ENCODE measurements at regions of chr1 and their contacts with region 1.

Region 1: DNA sequence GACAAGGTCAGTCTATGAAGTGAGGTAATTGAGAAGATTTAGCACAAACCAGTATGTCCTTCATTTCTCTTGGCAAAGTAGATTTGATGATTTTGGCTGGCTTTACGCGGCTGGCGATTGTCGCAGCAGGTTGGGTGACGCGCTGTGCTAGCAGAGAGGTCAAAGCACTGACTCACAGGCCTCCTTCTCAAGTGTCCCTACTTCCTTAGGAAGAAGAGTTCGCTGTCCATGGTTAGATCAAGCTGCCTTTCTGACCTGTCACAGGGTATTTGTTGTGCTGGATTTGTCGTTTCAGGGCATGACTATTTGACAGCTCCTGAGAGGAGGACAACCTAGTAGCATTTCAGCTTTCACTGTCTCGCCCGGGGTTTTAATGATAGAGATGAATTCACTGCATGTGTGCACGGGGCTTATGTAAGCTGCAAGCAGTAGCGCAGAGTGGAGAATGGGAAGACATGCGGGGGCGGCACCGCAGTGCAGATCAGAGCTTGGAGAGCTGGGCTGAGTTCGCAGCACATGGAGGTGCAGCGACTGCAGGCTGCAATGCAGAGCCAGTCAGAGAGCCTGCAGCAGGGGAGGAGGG is 32.8 kb downstream of the XCL1 start:
- DNase-seq: peak; percentile 60 to 92
- H3K4me3 ChIP-seq: peak overlapping the region in 1 of 2 donors; percentile 33
- H3K27ac ChIP-seq: peak overlapping the region; percentile 91 to 94
- H3K4me1 ChIP-seq: peaks cover 13 to 30% of the 10 kb centered on the region in 2 donors
- H3K27me3 ChIP-seq: no peaks in the 10 kb centered on the region
- CTCF ChIP-seq: no peak

Region 2: DNA sequence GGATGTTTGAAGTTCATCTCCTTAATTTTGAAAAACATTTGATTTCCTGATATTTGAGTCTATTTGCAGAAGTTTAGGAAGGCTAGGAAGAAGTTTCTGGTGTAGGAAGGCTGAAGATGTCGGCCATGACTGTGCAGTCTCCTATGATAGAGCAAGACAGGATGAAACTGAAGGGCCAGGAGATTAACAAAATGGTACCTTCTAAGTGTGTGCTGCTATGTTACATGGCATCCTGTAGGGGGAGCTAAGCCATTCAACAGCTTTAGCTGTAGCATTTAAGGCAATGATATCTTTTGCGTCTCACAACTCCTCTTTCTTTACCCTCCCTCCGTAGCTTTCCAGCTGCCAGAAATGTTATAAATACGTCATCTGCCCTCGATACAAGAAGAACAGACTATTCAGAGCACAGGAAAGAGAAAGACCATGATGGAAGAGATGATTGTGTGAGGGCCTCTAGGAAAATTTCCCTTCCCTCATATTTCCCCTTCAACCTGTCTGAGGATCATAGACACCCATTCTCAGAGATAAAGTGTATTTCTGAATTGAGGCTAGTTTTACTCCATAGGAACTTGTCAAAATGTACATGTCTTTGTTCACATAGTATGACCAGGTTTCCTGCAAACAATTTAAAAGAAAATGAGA is 28.2 kb after region 1 on chr1:
- intact Hi-C with region 1: loop called (anchors 1 kb)
- DNase-seq: no peak
- H3K4me3 ChIP-seq: no peak overlapping the region
- H3K27ac ChIP-seq: peak overlapping the region; percentile 61 to 67
- H3K4me1 ChIP-seq: peaks cover 0 to 12% of the 10 kb centered on the region in 2 donors
- H3K27me3 ChIP-seq: no peaks in the 10 kb centered on the region
- CTCF ChIP-seq: peak in 1 of 3 experiments; percentile 21

Region 3: DNA sequence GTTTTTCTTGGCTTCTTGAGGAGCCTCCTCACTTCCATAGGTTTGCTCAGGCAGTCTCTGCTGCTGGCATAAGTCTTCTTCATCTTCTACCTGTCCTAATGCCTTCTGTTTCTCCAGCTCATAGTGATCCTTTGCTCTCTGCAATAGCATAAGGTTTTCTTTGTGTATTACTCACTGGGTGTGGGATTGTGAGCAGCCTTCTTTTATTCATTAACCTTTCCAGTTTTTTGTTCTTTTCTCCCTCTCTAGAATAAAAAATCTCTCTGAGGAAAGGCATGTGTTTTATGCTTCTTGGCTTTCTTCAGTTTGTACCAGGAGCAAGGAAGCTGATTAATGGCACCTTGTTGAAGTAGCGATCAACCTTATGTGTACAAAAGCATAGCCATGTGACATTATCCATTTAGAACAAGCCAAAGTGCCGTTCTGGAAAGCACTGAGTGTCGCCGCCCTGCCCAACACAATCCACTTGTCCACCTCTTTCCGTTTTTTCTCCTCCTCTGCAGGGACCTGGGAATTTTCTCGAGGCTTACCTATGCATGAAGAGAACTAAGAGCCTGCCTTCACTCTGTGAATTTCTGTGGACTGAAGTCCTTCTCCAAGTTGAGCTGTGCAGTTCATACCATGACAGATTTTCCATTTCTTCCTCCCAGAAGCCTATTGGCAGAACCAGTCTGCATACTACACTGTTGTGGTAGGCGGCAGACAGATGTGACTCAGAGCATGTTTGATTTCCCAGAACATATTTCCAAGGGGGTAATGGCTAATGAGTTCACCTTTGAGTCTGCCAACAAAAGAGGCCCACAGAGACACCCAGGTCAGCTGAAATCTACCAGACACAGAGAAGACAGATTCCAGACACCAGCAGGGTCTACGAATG is 80.7 kb after region 1 on chr1:
- intact Hi-C with region 1: loop called (anchors 5 kb)
- DNase-seq: peak in 1 of 2 donors; percentile 73
- H3K4me3 ChIP-seq: peak overlapping the region in 1 of 2 donors; percentile 25
- H3K27ac ChIP-seq: peak overlapping the region; percentile 42 to 58
- H3K4me1 ChIP-seq: no peaks in the 10 kb centered on the region
- H3K27me3 ChIP-seq: no peaks in the 10 kb centered on the region
- CTCF ChIP-seq: no peak

Region 4: DNA sequence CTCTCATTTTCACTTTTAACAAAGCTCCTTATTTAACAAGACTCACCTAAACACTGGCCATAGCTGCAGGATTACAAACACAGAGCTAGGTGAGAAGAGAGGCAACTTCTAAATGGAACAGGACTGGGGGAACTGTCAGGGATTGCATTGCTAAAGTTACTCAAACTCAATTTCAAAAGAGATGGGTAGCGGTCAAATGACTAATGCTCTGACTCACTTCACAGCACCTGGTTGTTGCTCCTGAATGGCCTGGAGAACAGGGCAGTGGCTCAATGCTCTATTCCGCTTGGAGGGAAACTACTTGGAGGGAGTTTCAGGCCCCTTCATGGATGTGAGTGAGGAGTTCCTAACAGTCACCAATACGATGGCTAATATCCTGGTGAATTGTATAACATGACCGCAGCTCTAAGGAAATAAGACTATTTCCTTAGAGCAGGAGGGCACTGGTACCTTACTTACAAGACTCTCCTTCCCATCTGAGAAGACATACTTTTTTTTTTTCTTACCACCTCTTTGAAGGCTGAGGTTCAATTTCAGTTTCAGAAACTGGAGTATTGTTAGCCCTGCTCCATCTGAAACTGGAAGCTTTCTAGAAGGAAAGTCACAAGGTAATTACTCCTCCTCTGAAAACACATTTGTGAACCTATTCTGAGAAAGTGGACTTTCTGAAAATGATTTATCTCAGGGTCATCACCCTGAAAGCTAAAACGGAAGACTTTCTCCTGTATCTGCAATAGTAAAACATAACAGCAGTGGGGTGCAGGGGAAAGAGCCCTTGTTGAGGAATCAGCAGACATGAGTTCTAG is 110.3 kb after region 1 on chr1:
- intact Hi-C with region 1: loop called (anchors 5 kb)
- DNase-seq: no peak
- H3K4me3 ChIP-seq: no peak overlapping the region
- H3K27ac ChIP-seq: no peak overlapping the region
- H3K4me1 ChIP-seq: no peaks in the 10 kb centered on the region
- H3K27me3 ChIP-seq: no peaks in the 10 kb centered on the region
- CTCF ChIP-seq: no peak

Region 5: GRCh38 chr1:169106095-169106920 is 497.1 kb after region 1 on chr1 and contains the start of gene ATP1B1:
- intact Hi-C with region 1: loop called (anchors 2 kb)
- DNase-seq: peak; percentile 54 to 92
- H3K4me3 ChIP-seq: peak within 1 kb of the TSS; percentile 60 to 96
- H3K27ac ChIP-seq: peak within 1 kb of the TSS; percentile 74 to 80
- H3K4me1 ChIP-seq: peaks cover 2 to 11% of the 10 kb centered on the region in 2 donors
- H3K27me3 ChIP-seq: no peaks in the 10 kb centered on the region
- CTCF ChIP-seq: peak; percentile 38 to 55 (median 54)
- total RNA-seq, gene ATP1B1: 3.5 TPM

Region 6: DNA sequence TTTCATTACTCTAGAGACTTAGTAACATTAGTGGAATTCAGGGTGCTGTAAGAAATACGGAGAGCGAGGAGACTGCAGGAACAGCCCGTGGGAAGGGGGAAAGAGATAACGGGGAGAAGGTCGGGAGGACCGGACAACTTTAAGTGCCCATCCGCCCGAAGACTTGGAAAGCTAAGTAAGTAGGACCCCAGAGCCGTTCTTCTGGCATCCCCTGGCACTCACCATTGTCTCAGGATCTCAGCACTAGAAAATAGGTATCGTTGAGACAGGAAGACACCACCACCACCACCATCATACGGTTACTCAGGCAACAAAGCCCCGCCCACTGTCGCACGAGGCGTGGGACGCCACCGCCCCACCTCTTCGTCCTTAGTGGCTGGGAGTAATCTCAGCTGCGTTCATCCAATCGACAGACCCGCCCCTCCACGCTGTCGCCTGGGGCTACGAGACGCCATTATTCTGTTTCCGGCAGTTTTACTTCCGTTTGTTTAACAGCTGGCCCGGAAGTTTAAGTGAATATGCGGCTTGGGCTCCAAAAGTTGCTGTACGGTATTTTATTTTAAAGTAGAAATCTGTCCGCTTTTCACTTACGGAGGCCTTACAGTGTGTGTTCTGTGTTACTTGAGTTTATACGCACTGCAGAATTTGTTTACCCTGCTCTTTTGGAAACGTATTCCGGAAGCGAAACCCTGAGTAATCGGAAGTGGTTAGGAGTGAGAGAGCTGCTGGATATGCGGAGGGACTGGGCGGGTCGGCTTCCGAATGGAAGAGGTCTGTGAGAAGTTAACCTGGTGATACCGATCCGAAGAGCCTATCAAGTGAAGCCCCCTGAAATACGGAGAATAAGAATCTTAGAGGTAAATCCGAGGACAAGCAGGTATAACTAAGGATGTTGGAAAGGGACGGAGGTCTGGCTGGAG is 758.5 kb after region 1 on chr1 and contains the starts of genes BLZF1 and NME7:
- intact Hi-C with region 1: loop called (anchors 5 kb)
- DNase-seq: peak; percentile 95 to 98
- H3K4me3 ChIP-seq: peak within 1 kb of the TSS; percentile 84 to 90
- H3K27ac ChIP-seq: peak within 1 kb of the TSS; percentile 64 to 80
- H3K4me1 ChIP-seq: peaks cover 0 to 6% of the 10 kb centered on the region in 2 donors
- H3K27me3 ChIP-seq: no peaks in the 10 kb centered on the region
- CTCF ChIP-seq: no peak
- total RNA-seq, gene BLZF1: 8.5 TPM
- total RNA-seq, gene NME7: 4.9 TPM

Measured in ascending aorta (tissue), 2 donors.